ENCODE measurements at regions of chr10 and their contacts with region 1.

Region 1: DNA sequence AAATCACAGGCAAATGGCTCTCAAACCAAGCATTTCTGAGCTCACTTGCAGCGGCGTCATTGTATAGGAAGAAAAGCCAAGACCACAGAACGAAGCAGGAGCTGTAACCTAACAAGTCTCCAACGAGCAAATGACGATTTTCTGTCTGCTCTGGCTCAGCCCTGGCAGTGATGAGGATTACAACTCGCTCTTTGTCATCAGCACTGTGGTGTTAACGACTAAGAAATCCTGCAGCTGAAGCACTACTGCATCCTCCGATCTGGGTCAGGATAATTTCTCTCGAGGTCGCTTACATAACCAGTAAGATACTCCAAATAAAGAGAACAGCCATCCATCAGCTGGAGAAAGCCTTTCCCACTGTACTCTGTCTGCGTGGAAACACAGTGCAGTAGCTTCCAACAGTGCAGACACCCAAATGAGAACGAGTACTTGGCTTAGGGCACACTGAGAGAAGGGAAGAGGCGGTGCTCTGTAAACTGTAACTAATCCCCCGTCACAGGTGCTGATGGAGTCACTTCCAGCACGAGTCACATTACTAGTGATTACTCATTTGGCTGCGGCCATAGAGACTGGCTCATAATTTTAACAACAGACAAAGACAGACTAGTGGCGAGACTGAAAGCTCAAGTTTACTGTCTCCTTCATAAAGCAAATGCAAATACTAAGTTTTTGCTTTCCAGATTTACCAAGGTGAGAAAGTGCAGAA is 135.8 kb downstream of the NRBF2 start:
- DNase-seq: peak; percentile 81
- H3K4me3 Mint-ChIP-seq: peak overlapping the region; percentile 95
- H3K27ac Mint-ChIP-seq: peak overlapping the region; percentile 98
- H3K4me1 Mint-ChIP-seq: peaks cover 31% of the 10 kb centered on the region
- H3K27me3 Mint-ChIP-seq: no peaks in the 10 kb centered on the region

Region 2: DNA sequence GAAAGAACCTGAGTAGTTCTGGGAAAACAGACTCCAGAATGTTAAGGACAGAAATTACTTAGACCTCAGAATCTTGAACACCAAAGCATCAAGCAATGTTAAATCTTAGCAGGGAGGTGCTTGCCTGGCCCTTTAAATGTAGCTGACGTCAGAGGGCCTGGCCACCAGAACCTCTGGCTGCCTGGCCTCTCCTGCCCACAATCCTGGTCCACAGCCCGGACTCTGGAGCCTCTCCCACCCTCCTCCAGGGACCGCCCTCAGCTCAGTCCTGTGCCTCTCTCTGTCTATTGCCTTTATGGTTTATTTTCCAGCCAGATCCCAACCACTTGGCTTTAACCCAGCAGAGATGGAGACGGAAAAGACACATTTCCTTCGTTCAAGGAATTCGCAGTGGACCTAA is 410.6 kb before region 1 on chr10:
- intact Hi-C with region 1: loop called (anchors 2 kb)
- DNase-seq: no peak
- H3K4me3 Mint-ChIP-seq: no peak overlapping the region
- H3K27ac Mint-ChIP-seq: no peak overlapping the region
- H3K4me1 Mint-ChIP-seq: peaks cover 60% of the 10 kb centered on the region
- H3K27me3 Mint-ChIP-seq: peaks cover 6% of the 10 kb centered on the region

Region 3: GRCh38 chr10:63173468-63174232 is 95.3 kb before region 1 on chr10:
- intact Hi-C with region 1: loop called (anchors 1 kb)
- DNase-seq: no peak
- H3K4me3 Mint-ChIP-seq: peak overlapping the region; percentile 61
- H3K27ac Mint-ChIP-seq: peak overlapping the region; percentile 86
- H3K4me1 Mint-ChIP-seq: peaks cover 78% of the 10 kb centered on the region
- H3K27me3 Mint-ChIP-seq: no peaks in the 10 kb centered on the region

Region 4: GRCh38 chr10:63236113-63236935 is 32.6 kb before region 1 on chr10:
- intact Hi-C with region 1: loop called (anchors 1 kb)
- DNase-seq: no peak
- H3K4me3 Mint-ChIP-seq: peak overlapping the region; percentile 28
- H3K27ac Mint-ChIP-seq: peak overlapping the region; percentile 72
- H3K4me1 Mint-ChIP-seq: peaks cover 49% of the 10 kb centered on the region
- H3K27me3 Mint-ChIP-seq: no peaks in the 10 kb centered on the region

Region 5: GRCh38 chr10:63521416-63522276 is 252.7 kb after region 1 on chr10:
- intact Hi-C with region 1: loop called (anchors 1 kb)
- DNase-seq: peak; percentile 49
- H3K4me3 Mint-ChIP-seq: peak overlapping the region; percentile 83
- H3K27ac Mint-ChIP-seq: peak overlapping the region; percentile 88
- H3K4me1 Mint-ChIP-seq: peaks cover 63% of the 10 kb centered on the region
- H3K27me3 Mint-ChIP-seq: no peaks in the 10 kb centered on the region

Measured in activated T-helper 1 cell treated with anti-CD3 and anti-CD28 coated beads, Interleukin-12 subunit alpha, Interleukin-12 subunit beta, Interleukin-2, Interleukin-4 antibody, amounts not matched to agents 30 ng/mL and 10 ng/mL and 1 ng/mL, durations not matched to agents 14 hours and 24 hours and 36 hours (primary cell).